ENCODE measurements at regions of chr16 and their contacts with region 1.

Region 1: GRCh38 chr16:87316923-87317749 is at the start of gene C16orf95:
- DNase-seq: peak; percentile 66
- H3K4me3 ChIP-seq: peak within 1 kb of the TSS; percentile 93
- CTCF ChIP-seq: peak; percentile 65

Region 2: GRCh38 chr16:87203060-87203656 is 114.0 kb before region 1 on chr16:
- CTCF ChIA-PET with region 1: no interaction called
- POLR2A ChIA-PET with region 1: no interaction called
- DNase-seq: peak; percentile 60
- H3K4me3 ChIP-seq: no peak overlapping the region
- CTCF ChIP-seq: peak; percentile 97

Region 3: GRCh38 chr16:87297918-87298631 is 19.1 kb before region 1 on chr16:
- CTCF ChIA-PET with region 1: interaction called, 11 read pairs
- POLR2A ChIA-PET with region 1: no interaction called
- DNase-seq: no peak
- H3K4me3 ChIP-seq: no peak overlapping the region
- CTCF ChIP-seq: peak; percentile 66

Region 4: GRCh38 chr16:87305505-87306391 is 11.4 kb before region 1 on chr16:
- CTCF ChIA-PET with region 1: interaction called, 18 read pairs
- POLR2A ChIA-PET with region 1: no interaction called
- DNase-seq: peak; percentile 16
- H3K4me3 ChIP-seq: peak overlapping the region; percentile 39
- CTCF ChIP-seq: peak; percentile 54

Region 5: DNA sequence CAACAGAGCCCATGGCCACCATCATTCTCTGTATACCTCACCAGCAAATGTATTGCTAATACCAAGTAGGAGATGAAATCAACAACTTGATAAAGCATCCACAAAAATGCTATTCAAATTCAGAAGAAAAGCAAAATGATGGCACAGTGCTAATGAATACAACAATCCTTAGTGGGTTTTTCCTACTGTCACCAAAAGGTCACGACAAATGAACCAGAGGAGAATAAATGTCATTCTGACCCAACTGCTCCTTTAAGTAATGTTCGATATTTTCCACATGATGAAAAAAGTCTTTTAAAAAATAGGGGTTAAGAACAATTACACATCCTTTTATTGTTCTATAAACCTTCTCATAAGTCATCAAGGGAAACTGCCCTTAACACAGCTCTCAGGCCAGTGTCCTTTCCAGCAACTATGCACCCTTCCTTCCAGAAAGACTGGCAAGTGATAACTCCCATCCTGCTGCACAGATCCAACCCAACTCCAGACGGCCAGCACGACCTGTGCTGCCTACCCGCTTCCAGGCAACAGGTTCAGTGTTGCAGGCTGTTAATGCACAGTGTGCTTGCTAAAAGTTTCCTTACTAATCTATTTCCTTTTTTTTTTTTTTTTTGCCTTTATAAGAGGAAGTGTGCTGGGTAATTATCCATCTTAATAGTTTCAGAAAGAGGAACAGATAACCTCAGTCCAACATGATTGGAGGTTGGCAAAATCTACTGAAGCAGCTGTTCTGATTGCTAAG is 51.1 kb after region 1 on chr16:
- CTCF ChIA-PET with region 1: no interaction called
- POLR2A ChIA-PET with region 1: no interaction called
- DNase-seq: no peak
- H3K4me3 ChIP-seq: no peak overlapping the region
- CTCF ChIP-seq: no peak

Region 6: GRCh38 chr16:87461466-87461991 is 144.4 kb after region 1 on chr16:
- CTCF ChIA-PET with region 1: no interaction called
- POLR2A ChIA-PET with region 1: no interaction called
- DNase-seq: no peak
- H3K4me3 ChIP-seq: no peak overlapping the region
- CTCF ChIP-seq: no peak

Region 7: GRCh38 chr16:87598431-87598830 is 281.3 kb after region 1 on chr16:
- CTCF ChIA-PET with region 1: no interaction called
- POLR2A ChIA-PET with region 1: no interaction called
- DNase-seq: no peak
- H3K4me3 ChIP-seq: no peak overlapping the region
- CTCF ChIP-seq: no peak

Measured in AG04449 (cell line).